A549 (cell line): ENCODE measurements at regions of chr3 and their contacts with region 1.

Region 1: DNA sequence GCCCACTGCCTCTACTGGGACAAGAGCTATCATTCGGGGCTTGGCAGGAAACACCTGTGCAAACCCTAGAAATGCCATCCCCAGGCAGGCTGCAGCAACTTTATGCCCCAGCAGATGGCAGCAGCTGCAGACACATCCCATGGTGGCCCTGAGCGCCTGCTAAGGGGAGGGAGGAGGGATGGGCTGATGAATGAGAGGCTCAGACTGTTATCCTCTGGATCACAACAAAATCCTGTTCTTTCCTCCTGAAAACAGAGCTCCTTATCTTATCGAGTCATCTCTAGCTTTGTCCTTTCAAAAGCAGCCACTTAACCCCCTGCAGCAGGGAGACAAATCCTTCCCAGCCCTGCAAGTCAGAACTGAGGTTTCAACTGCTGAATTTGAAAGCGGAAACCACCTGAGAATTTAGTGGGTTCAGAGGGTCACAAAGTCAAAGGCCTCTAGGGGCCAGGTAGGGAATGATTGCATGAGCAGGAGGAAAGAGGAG is 90.6 kb upstream of the PROK2 start:
- DNase-seq: peak; percentile 63 to 67
- ATAC-seq: peak; percentile 97 to 99
- H3K4me3 ChIP-seq: no peak overlapping the region
- H3K27ac ChIP-seq: no peak overlapping the region
- H3K4me1 ChIP-seq: no peaks in the 10 kb centered on the region
- CTCF ChIP-seq: peak; percentile 76
- EP300 ChIP-seq: no peak
- POLR2A ChIP-seq: no peak
- RAD21 ChIP-seq: peak; percentile 83 to 87

Region 2: GRCh38 chr3:71616571-71617101 is 258.9 kb before region 1 on chr3:
- CTCF ChIA-PET with region 1: no interaction called
- POLR2A ChIA-PET with region 1: no interaction called
- DNase-seq: no peak
- ATAC-seq: no peak
- H3K4me3 ChIP-seq: no peak overlapping the region
- H3K27ac ChIP-seq: no peak overlapping the region
- H3K4me1 ChIP-seq: no peaks in the 10 kb centered on the region
- CTCF ChIP-seq: no peak
- EP300 ChIP-seq: no peak
- POLR2A ChIP-seq: no peak
- RAD21 ChIP-seq: no peak

Region 3: GRCh38 chr3:71776538-71776937 is 99.0 kb before region 1 on chr3:
- CTCF ChIA-PET with region 1: no interaction called
- POLR2A ChIA-PET with region 1: no interaction called
- DNase-seq: no peak
- ATAC-seq: no peak
- H3K4me3 ChIP-seq: no peak overlapping the region
- H3K27ac ChIP-seq: no peak overlapping the region
- H3K4me1 ChIP-seq: no peaks in the 10 kb centered on the region
- CTCF ChIP-seq: no peak
- EP300 ChIP-seq: no peak
- POLR2A ChIP-seq: no peak
- RAD21 ChIP-seq: no peak

Region 4: DNA sequence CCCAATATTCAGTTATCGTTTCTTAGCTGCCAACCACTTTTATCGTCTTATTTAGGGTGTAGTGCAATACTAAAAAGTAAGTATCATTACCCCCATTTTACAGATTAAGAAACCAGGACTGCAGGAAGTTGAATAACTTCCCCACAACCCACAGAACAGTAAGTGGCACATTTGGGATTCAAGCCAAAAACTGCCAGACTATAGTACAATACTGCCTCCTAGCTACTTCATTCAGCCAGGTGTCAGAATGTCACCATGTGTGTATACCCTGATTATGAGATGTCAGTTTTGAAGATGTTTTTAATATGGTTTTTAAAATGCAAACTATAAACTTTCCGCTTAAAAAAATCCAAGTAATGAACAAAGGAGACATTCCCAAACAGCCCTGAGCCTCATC is 16.4 kb before region 1 on chr3:
- CTCF ChIA-PET with region 1: interaction called, 28 read pairs
- POLR2A ChIA-PET with region 1: no interaction called
- DNase-seq: peak; percentile 11 to 42
- ATAC-seq: peak; percentile 64 to 69; a peak in 3 of 6 replicates
- H3K4me3 ChIP-seq: no peak overlapping the region
- H3K27ac ChIP-seq: no peak overlapping the region
- H3K4me1 ChIP-seq: no peaks in the 10 kb centered on the region
- CTCF ChIP-seq: peak; percentile 40
- EP300 ChIP-seq: no peak
- POLR2A ChIP-seq: no peak
- RAD21 ChIP-seq: peak; percentile 56 to 64

Region 5: GRCh38 chr3:71893122-71893521 is 17.6 kb after region 1 on chr3:
- CTCF ChIA-PET with region 1: interaction called, 80 read pairs
- POLR2A ChIA-PET with region 1: no interaction called
- DNase-seq: no peak
- ATAC-seq: no peak
- H3K4me3 ChIP-seq: no peak overlapping the region
- H3K27ac ChIP-seq: no peak overlapping the region
- H3K4me1 ChIP-seq: no peaks in the 10 kb centered on the region
- CTCF ChIP-seq: no peak
- EP300 ChIP-seq: no peak
- POLR2A ChIP-seq: no peak
- RAD21 ChIP-seq: no peak

Region 6: GRCh38 chr3:71919572-71919971 is 44.1 kb after region 1 on chr3:
- CTCF ChIA-PET with region 1: interaction called, 11 read pairs
- POLR2A ChIA-PET with region 1: no interaction called
- DNase-seq: no peak
- ATAC-seq: no peak
- H3K4me3 ChIP-seq: no peak overlapping the region
- H3K27ac ChIP-seq: no peak overlapping the region
- H3K4me1 ChIP-seq: no peaks in the 10 kb centered on the region
- CTCF ChIP-seq: no peak
- EP300 ChIP-seq: no peak
- POLR2A ChIP-seq: no peak
- RAD21 ChIP-seq: no peak